Naive thymus-derived CD4-positive, alpha-beta T cell (primary cell): ENCODE measurements at regions of chr2 and their contacts with region 1.

Region 1: GRCh38 chr2:74391580-74392448 is 11.7 kb upstream of the DCTN1 start:
- DNase-seq: peak; percentile 89 to 99 (median 93)
- ATAC-seq: peak; percentile 97
- H3K4me3 ChIP-seq: peak overlapping the region; percentile 78
- H3K4me3 Mint-ChIP-seq: peak overlapping the region in 4 of 10 donors; percentile 40 to 100 (median 92)
- H3K27ac ChIP-seq: peak overlapping the region; percentile 91
- H3K27ac Mint-ChIP-seq: peak overlapping the region in 8 of 9 donors; percentile 98 to 100 (median 99)
- H3K4me1 ChIP-seq: peaks cover 8 to 25% of the 10 kb centered on the region in 2 donors
- H3K4me1 Mint-ChIP-seq: peaks cover 0 to 15% (median 5%) of the 10 kb centered on the region in 7 donors
- H3K27me3 ChIP-seq: no peaks in the 10 kb centered on the region
- H3K27me3 Mint-ChIP-seq: peaks cover 0 to 14% (median 5%) of the 10 kb centered on the region in 5 donors

Region 2: GRCh38 chr2:74379851-74380789 is 11.7 kb before region 1 on chr2 and contains the start of gene DCTN1:
- CTCF ChIA-PET with region 1: interaction called, 3 read pairs
- POLR2A ChIA-PET with region 1: interaction called, 8 read pairs
- intact Hi-C with region 1: loop called in 1 of 2 experiments (anchors 1 kb)
- DNase-seq: peak in 4 of 9 donors; percentile 7 to 24 (median 12)
- ATAC-seq: peak; percentile 66
- H3K4me3 ChIP-seq: no peak within 1 kb of the TSS
- H3K4me3 Mint-ChIP-seq: peak within 1 kb of the TSS; percentile 5 to 85 (median 68)
- H3K27ac ChIP-seq: peak within 1 kb of the TSS; percentile 32
- H3K27ac Mint-ChIP-seq: peak within 1 kb of the TSS in 6 of 9 donors; percentile 1 to 88 (median 40)
- H3K4me1 ChIP-seq: peaks cover 12 to 17% of the 10 kb centered on the region in 2 donors
- H3K4me1 Mint-ChIP-seq: peaks cover 32 to 56% (median 49%) of the 10 kb centered on the region in 7 donors
- H3K27me3 ChIP-seq: no peaks in the 10 kb centered on the region
- H3K27me3 Mint-ChIP-seq: no peaks in the 10 kb centered on the region
- total RNA-seq, gene DCTN1: 73.6 to 113 (median 98.5) TPM

Region 3: DNA sequence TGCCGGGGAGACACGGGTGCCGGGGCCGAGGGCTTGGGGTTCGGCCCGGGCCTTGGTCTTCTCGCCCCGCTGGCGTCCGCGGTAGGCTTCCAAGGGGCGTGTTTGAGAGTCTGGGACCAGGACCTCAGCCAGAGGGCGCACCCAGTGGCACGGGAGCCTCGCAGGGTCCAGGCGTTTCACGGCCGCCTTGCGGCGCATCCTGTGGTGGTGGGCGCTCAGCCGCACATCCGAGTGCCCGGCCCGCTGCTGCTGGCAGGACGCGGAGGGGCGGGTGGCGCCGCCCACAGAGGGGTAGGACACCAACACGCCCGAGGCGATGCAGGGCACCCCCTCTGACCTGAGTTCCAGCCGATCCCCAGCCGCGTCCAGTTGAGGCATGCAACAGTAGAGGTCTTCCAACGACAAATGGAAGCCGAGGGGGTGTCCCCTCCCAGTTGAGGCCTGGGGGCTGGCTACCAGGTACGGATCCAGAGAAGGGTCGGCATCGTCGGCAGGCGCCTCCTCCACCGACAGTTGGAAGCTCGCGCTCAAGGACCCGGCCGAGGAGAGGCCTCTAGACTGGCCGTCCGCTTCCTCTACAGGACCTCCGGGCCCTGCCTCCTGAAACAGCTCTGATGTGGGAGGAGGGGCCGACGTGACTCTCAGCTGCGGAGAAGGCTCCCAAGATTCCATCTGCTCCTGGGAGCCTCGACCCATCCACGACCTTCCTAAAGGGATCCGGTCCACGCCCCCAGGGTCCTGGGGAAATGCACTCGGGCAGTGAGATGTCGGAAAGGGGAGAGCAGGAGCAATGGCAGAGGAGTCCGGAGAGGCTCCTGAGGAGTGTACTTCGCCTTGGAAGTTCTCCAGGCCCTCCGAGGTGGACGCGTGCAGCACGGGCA is 23.3 kb after region 1 on chr2:
- CTCF ChIA-PET with region 1: interaction called, 3 read pairs
- POLR2A ChIA-PET with region 1: interaction called, 23 read pairs
- intact Hi-C with region 1: loop called in 1 of 2 experiments (anchors 1 kb)
- DNase-seq: peak in 4 of 9 donors; percentile 14 to 33 (median 26)
- ATAC-seq: peak; percentile 54
- H3K4me3 ChIP-seq: peak overlapping the region; percentile 57
- H3K4me3 Mint-ChIP-seq: peak overlapping the region; percentile 37 to 87 (median 78)
- H3K27ac ChIP-seq: peak overlapping the region; percentile 49
- H3K27ac Mint-ChIP-seq: peak overlapping the region in 4 of 9 donors; percentile 21 to 92 (median 74)
- H3K4me1 ChIP-seq: peaks cover 0 to 14% of the 10 kb centered on the region in 2 donors
- H3K4me1 Mint-ChIP-seq: peaks cover 8 to 42% (median 31%) of the 10 kb centered on the region in 7 donors
- H3K27me3 ChIP-seq: peaks cover 0 to 4% of the 10 kb centered on the region in 2 donors
- H3K27me3 Mint-ChIP-seq: peaks cover 0 to 12% (median 0%) of the 10 kb centered on the region in 5 donors

Region 4: GRCh38 chr2:74719066-74719465 is 327.3 kb after region 1 on chr2:
- CTCF ChIA-PET with region 1: no interaction called
- POLR2A ChIA-PET with region 1: no interaction called
- intact Hi-C with region 1: no loop called
- DNase-seq: no peak
- ATAC-seq: no peak
- H3K4me3 ChIP-seq: no peak overlapping the region
- H3K4me3 Mint-ChIP-seq: no peak overlapping the region
- H3K27ac ChIP-seq: no peak overlapping the region
- H3K27ac Mint-ChIP-seq: no peak overlapping the region
- H3K4me1 ChIP-seq: no peaks in the 10 kb centered on the region
- H3K4me1 Mint-ChIP-seq: peaks cover 4 to 10% (median 8%) of the 10 kb centered on the region in 7 donors
- H3K27me3 ChIP-seq: peaks cover 0 to 8% of the 10 kb centered on the region in 2 donors
- H3K27me3 Mint-ChIP-seq: peaks cover 6 to 27% (median 9%) of the 10 kb centered on the region in 5 donors